ENCODE measurements at regions of chr14 and their contacts with region 1.

Region 1: DNA sequence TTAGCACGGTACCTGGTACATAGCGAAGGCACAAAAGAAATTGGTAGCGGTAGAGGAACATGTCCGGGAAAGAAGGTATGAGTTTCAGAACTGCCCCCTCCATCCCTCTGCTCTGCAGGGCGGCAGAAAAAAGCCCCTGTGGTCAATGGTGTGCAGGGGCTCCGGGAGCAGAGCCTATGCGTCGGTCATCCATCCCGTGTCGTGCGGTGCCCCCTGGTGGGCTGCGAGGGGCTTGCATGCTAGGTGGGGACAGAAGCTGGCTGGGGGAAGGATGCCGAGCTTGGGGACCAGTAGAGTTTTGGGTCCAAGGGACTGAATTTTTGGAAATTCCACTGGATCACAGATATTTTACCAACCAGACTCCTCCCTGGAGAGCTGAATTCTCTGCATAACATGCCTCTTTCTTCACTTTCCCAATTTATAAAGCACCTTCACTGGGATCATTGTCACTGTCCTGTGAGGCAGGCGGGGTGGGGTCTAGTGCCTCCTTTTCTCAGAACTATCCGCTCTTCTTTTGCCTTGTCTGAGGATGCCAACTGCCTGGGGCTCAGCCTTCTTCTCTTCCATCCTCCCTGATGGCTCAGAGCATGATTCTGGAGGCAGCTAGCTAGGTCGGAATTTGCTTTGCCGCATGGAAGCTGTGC is 148.7 kb downstream of the SMOC1 start:
- DNase-seq: peak; percentile 76 to 90
- H3K4me3 ChIP-seq: no peak overlapping the region
- H3K4me3 Mint-ChIP-seq: no peak overlapping the region
- H3K27ac Mint-ChIP-seq: no peak overlapping the region
- H3K4me1 ChIP-seq: peaks cover 11% of the 10 kb centered on the region
- H3K4me1 Mint-ChIP-seq: peaks cover 10% of the 10 kb centered on the region
- H3K27me3 ChIP-seq: no peaks in the 10 kb centered on the region
- H3K27me3 Mint-ChIP-seq: no peaks in the 10 kb centered on the region
- CTCF ChIP-seq: peak; percentile 95 to 96

Region 2: GRCh38 chr14:69726761-69727511 is 301.0 kb before region 1 on chr14:
- CTCF ChIA-PET with region 1: interaction called, 13 read pairs
- POLR2A ChIA-PET with region 1: no interaction called
- intact Hi-C with region 1: loop called (anchors 1 kb)
- DNase-seq: peak; percentile 67 to 85
- H3K4me3 ChIP-seq: peak overlapping the region; percentile 45
- H3K4me3 Mint-ChIP-seq: peak overlapping the region; percentile 67
- H3K27ac Mint-ChIP-seq: no peak overlapping the region
- H3K4me1 ChIP-seq: 0 out of 2 replicates have a peak, but pooled peaks cover 4% of the 10 kb centered on the region
- H3K4me1 Mint-ChIP-seq: no peaks in the 10 kb centered on the region
- H3K27me3 ChIP-seq: no peaks in the 10 kb centered on the region
- H3K27me3 Mint-ChIP-seq: no peaks in the 10 kb centered on the region
- CTCF ChIP-seq: peak; percentile 94 to 97

Region 3: DNA sequence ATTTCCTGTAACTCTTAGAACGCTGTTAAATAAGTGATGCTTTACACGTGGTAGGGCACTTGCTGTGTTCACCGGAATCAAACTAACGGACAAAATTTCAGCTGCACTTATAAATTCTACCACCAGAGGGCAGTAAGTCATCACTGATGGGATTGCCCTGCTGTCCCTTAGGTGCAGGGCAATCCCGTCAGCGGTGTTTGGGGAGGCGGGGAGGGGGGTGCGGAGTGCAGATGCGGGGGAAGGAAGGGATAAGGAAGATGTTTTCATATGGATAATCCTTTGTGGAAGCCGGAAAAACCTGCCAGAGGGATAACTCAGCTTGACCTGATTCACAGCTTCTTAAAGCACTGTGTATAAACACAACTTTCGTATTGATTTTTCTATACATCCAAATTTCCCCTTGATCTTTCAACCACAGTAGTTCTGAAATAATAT is 209.1 kb before region 1 on chr14:
- CTCF ChIA-PET with region 1: interaction called, 39 read pairs
- POLR2A ChIA-PET with region 1: no interaction called
- intact Hi-C with region 1: loop called (anchors 1 kb)
- DNase-seq: peak; percentile 70 to 81
- H3K4me3 ChIP-seq: no peak overlapping the region
- H3K4me3 Mint-ChIP-seq: no peak overlapping the region
- H3K27ac Mint-ChIP-seq: no peak overlapping the region
- H3K4me1 ChIP-seq: peaks cover 18% of the 10 kb centered on the region
- H3K4me1 Mint-ChIP-seq: no peaks in the 10 kb centered on the region
- H3K27me3 ChIP-seq: no peaks in the 10 kb centered on the region
- H3K27me3 Mint-ChIP-seq: no peaks in the 10 kb centered on the region
- CTCF ChIP-seq: peak; percentile 76 to 80

Region 4: DNA sequence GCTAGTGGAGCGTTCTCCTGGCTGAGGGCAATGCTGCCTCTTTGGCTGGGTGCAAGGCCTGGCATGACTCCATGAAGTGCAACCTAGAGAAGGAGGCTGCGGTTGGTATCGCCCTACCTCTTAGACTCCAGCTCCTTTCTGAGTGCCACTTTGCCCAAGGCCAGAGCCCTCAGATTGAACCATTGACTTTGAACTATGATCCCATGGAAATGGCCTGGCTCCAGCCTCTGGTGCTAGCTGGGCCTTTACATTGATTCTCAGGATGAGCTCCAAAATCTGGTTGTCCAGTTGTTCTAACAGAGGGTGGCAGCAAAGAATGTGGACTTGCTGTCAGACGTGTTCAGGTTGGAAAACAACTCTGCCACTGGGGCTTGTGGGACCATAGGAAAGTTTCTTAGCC is 164.8 kb before region 1 on chr14:
- CTCF ChIA-PET with region 1: interaction called, 26 read pairs
- POLR2A ChIA-PET with region 1: no interaction called
- intact Hi-C with region 1: no loop called
- DNase-seq: no peak
- H3K4me3 ChIP-seq: no peak overlapping the region
- H3K4me3 Mint-ChIP-seq: no peak overlapping the region
- H3K27ac Mint-ChIP-seq: no peak overlapping the region
- H3K4me1 ChIP-seq: peaks cover 9% of the 10 kb centered on the region
- H3K4me1 Mint-ChIP-seq: no peaks in the 10 kb centered on the region
- H3K27me3 ChIP-seq: no peaks in the 10 kb centered on the region
- H3K27me3 Mint-ChIP-seq: no peaks in the 10 kb centered on the region
- CTCF ChIP-seq: no peak

Region 5: GRCh38 chr14:70073924-70074566 is 46.1 kb after region 1 on chr14:
- CTCF ChIA-PET with region 1: interaction called, 15 read pairs
- POLR2A ChIA-PET with region 1: no interaction called
- intact Hi-C with region 1: loop called (anchors 1 kb)
- DNase-seq: peak; percentile 82 to 87
- H3K4me3 ChIP-seq: no peak overlapping the region
- H3K4me3 Mint-ChIP-seq: no peak overlapping the region
- H3K27ac Mint-ChIP-seq: no peak overlapping the region
- H3K4me1 ChIP-seq: peaks cover 13% of the 10 kb centered on the region
- H3K4me1 Mint-ChIP-seq: peaks cover 18% of the 10 kb centered on the region
- H3K27me3 ChIP-seq: no peaks in the 10 kb centered on the region
- H3K27me3 Mint-ChIP-seq: no peaks in the 10 kb centered on the region
- CTCF ChIP-seq: peak; percentile 88 to 96

Region 6: DNA sequence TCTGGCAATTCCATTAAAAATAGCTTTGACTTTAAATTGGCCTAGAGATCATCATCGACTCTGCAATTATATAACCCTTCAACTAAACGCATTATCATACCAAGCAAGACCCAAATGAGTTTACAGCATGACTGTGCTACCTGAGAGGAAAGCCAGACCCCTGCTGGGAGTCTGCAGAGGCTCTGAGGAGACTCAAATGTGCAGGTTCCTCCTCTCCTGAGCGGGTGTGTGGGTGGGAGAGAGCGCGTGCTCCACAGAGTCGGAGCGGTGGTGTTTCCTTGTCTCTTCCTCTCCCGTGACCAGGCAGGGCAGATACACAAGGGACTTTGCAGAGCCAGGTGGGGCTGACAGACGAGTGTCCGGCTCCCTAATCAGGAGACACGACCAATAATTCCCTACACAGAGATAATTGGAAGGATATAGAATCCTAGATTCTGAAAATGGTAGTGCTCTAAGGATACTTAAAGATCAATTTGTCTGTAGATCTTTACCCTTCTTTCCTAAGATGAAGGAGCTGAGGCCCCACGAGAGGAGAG is 86.8 kb after region 1 on chr14:
- CTCF ChIA-PET with region 1: no interaction called
- POLR2A ChIA-PET with region 1: no interaction called
- intact Hi-C with region 1: no loop called
- DNase-seq: no peak
- H3K4me3 ChIP-seq: no peak overlapping the region
- H3K4me3 Mint-ChIP-seq: no peak overlapping the region
- H3K27ac Mint-ChIP-seq: no peak overlapping the region
- H3K4me1 ChIP-seq: no peaks in the 10 kb centered on the region
- H3K4me1 Mint-ChIP-seq: no peaks in the 10 kb centered on the region
- H3K27me3 ChIP-seq: no peaks in the 10 kb centered on the region; the same call in 1 of the 2 replicates
- H3K27me3 Mint-ChIP-seq: peaks cover 14% of the 10 kb centered on the region
- CTCF ChIP-seq: no peak

Measured in Caco-2 (cell line).